ENCODE measurements at regions of chr13 and their contacts with region 1.

Region 1: DNA sequence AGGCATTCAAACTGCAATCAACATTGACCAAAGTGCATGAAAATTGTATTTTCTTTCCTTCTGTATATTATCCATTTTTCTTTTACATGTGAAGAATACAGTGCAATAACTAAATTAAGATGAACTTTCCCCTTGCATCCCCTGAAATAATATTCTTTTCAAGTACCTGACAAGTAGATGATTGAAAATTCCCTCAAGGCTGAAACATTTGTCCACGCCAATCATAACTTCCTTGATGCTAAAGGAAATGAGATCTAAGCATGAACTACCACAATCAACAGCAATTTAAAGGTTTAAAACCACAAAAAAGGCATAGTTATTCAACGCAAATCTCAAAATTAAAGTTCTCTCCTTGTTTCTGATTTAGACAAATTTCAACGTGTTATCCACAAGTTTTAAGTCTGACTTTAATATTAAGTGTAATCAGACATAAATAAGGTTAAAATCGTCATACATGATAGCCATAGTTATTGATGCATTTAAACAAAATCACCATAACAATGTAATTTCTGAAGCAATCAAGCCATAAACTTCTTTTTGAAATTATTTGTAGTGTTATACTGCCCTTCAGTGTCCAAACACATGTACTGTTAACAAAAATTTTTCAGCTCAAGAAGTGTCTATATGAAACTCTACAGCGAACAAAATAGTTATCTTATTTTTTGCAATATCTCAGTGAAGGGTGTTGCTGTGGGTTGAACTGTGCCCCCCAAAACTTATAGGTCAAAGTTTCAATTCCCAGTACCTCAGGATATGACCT is 169.5 kb downstream of the DCLK1 start:
- DNase-seq: no peak
- ATAC-seq: no peak

Region 2: DNA sequence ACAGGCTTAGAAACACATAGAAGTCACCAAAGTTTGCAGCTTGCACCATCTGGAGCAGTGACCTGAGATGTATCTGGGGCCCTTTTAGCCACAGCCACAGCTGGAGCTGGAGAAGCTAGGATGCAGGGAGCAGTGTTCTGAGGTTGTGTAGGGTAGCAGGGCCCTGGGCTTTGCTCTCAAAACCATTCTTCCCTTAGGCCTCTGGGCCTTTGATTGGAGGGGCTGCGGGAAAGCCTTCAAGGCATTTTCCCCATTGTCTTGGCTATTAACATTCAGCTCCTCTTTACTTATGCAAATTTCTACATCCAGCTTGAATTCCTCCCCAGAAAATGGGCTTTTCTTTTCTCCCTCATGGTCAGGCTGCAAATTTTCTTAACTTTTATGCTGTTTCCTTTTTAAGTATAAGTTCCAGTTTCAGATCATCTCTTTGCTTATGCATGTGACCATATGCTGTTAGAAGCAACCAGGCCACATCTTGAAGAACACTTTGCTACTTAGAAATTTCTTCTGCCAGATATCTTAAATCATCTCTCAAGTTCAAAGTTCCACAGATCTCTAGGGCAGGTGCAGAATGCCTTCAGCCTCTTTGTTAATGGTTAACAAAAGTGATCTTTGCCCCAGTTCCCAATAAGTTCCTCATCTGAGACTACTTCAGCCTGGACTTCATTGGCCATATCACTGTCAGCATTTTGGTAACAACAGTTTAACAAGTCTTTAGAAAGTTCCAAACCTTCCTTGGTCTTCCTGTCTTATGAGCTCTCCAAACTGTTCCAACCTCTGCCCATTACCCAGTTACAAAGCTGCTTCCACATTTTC is 971.0 kb before region 1 on chr13:
- intact Hi-C with region 1: no loop called
- DNase-seq: no peak
- ATAC-seq: no peak

Region 3: GRCh38 chr13:35649162-35649561 is 312.5 kb before region 1 on chr13:
- intact Hi-C with region 1: loop called (anchors 10 kb)
- DNase-seq: no peak
- ATAC-seq: peak; percentile 68

Region 4: GRCh38 chr13:35917252-35917941 is 44.2 kb before region 1 on chr13:
- intact Hi-C with region 1: no loop called
- DNase-seq: no peak
- ATAC-seq: no peak

Region 5: DNA sequence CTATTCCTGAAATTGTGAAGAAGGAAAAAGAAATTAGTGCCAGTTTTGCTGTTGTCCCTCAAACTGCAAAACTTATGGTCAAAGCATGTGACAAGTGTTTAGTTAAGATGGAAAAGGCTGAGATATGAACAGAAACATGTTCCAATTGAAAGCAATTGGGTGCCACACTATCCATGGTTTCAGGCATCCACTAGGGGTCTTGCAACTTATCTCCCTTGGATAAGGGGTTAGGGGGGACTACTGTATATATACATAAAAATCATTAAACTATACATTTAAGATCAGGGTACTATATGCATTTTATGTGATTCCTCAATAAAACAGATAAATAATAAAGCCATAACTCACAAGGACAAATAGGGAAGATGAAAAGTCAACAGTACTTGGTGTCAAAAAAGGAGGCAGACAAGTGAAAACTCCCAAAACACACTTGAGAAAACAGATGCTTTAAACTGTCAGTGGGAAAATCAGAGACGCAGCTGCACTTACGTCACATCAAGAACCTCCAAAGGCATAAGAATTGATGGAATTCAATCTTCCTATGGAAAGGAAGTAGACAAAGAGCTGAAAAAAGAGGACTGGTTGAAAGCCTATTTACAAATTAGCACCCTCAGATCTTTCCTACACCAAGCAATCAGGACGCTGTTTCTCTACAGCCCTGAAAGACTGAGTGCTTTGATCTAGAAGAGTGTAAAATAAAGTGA is 376.4 kb after region 1 on chr13:
- intact Hi-C with region 1: loop called (anchors 5 kb)
- DNase-seq: no peak
- ATAC-seq: no peak